CD4-positive, alpha-beta memory T cell (primary cell): ENCODE measurements at regions of chr19 and their contacts with region 1.

Region 1: DNA sequence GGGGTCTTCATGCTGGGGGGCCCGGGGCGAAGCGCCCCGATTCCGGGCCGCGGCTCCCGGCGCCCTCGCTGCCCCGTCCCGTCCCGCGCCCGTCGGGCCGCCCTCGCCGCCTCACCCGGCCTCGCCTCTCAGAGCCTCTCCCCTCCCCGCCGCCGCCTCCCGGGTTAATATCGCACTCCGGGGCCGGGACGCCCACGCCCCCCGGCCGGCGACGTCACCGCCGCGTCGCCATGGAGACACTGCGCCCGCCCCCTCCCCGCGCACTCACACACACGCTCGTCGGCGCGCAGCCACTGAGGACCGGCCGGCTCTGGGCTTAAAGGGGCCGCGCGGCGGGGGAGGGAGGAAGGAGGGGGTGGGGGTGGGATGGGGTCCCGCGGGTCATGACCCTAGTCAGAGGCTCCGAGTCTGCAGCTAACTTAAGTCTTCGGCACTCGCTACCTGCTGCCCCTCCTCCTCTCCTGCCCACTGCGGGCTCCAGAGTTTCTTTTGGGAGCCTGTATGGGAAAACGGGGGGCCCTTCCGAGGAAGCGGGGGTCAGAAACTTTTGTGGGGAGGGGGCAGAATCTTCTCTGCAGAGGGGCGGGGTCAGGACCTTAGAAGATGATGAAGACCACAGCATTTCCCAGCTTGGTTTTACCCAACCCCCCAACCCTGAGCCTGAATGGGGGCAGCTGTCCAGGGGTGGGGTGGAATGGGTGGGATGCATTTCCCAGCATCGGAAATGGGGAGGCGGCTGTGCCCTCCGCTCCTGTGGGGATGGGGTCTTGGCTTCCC is at the start of gene ERF:
- DNase-seq: peak; percentile 92 to 95 (median 94)
- H3K4me3 ChIP-seq: peak within 1 kb of the TSS; percentile 69 to 90
- H3K4me3 Mint-ChIP-seq: peak within 1 kb of the TSS; percentile 76 to 88 (median 82)
- H3K27ac ChIP-seq: peak within 1 kb of the TSS; percentile 93
- H3K27ac Mint-ChIP-seq: peak within 1 kb of the TSS; percentile 81 to 88 (median 86)
- H3K4me1 ChIP-seq: peaks cover 35% of the 10 kb centered on the region
- H3K4me1 Mint-ChIP-seq: peaks cover 12 to 40% (median 27%) of the 10 kb centered on the region in 4 donors
- H3K27me3 ChIP-seq: no peaks in the 10 kb centered on the region
- H3K27me3 Mint-ChIP-seq: peaks cover 3 to 4% of the 10 kb centered on the region in 2 donors
- total RNA-seq, gene ERF: 38.5 to 39.9 TPM

Region 2: DNA sequence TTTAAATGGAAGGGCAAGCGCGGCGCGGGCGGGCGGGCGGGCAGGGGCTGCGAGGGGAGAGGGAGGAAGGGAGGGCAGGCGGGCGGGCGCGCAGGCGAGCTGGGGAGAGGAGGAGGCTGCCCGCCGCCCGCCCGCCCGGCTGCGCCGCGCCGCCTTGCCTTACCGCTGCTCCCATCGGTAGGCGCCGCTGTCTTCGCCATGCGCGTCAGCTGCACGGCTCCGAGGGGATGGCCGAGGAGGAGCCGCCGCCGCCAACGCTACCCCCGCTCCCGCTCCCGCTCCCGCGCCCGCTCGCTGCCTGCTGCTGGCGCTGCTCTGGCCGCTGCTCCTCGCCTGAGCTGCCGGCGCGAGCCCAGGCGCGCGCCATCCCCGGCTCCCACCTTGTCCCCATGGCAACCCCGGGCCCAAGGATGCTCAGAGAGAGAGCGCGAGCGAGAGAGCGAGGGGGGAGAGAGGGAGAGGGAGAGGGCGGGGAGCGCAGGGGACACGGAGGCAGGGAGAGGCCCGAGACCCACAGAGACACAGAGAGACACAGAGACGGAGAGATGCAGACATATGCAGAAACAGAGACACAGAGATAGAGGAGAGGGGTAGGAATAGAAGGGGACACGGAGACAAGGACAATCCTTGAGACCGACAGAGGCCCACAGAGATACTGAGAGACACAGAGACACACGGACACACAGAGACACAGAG is 78.0 kb before region 1 on chr19:
- CTCF ChIA-PET with region 1: no interaction called
- POLR2A ChIA-PET with region 1: no interaction called
- intact Hi-C with region 1: no loop called
- DNase-seq: peak; percentile 75 to 79 (median 78)
- H3K4me3 ChIP-seq: peak overlapping the region in 1 of 2 donors; percentile 59
- H3K4me3 Mint-ChIP-seq: no peak overlapping the region
- H3K27ac ChIP-seq: no peak overlapping the region
- H3K27ac Mint-ChIP-seq: no peak overlapping the region
- H3K4me1 ChIP-seq: peaks cover 29% of the 10 kb centered on the region
- H3K4me1 Mint-ChIP-seq: peaks cover 10 to 29% (median 18%) of the 10 kb centered on the region in 4 donors
- H3K27me3 ChIP-seq: peaks cover 17% of the 10 kb centered on the region
- H3K27me3 Mint-ChIP-seq: peaks cover 4 to 11% of the 10 kb centered on the region in 2 donors

Region 3: DNA sequence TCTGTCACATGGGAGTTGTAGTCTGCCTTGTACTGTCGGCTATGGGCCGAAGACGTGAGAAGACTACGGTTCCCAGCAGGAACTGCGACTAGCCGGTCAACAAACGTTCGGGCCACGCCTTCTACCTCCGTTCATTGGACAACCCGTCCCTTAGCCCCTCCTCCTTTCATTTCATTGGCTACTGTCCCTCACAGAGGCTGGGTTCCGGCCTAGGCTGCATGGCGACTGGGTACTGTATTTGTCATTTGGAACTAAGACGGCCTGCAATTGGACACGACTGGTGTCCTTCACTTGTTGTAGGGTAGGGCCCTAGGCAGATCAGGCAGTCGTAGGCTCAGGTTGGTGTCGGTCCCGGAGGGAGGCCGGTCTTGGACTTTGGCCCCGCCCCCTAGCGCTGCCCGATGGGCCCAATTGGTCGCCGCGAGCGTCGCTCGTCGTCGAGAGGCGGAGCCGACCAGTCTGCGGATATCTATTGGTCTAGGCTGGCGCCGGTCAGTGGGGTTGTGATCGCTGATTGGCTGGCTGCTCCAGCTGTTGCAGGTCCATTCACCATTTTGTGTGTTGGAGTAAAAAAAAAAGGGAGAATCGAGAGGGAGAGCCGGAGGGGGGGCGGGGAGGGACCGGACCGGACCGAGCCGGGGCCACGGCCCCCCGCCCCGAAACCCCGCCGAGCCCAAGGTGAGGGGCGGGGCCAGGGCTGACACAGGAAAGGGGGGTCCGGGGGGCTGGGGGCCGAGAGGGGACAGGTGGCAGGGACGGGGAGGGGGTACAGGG is 13.7 kb after region 1 on chr19 and contains the start of gene CIC:
- CTCF ChIA-PET with region 1: no interaction called
- POLR2A ChIA-PET with region 1: interaction called, 8 read pairs
- intact Hi-C with region 1: loop called (anchors 1 kb)
- DNase-seq: peak; percentile 100
- H3K4me3 ChIP-seq: peak within 1 kb of the TSS; percentile 83 to 96
- H3K4me3 Mint-ChIP-seq: peak within 1 kb of the TSS in 4 of 8 donors; percentile 89 to 94 (median 92)
- H3K27ac ChIP-seq: peak within 1 kb of the TSS; percentile 99
- H3K27ac Mint-ChIP-seq: peak within 1 kb of the TSS in 4 of 7 donors; percentile 96 to 99 (median 98)
- H3K4me1 ChIP-seq: peaks cover 33% of the 10 kb centered on the region
- H3K4me1 Mint-ChIP-seq: peaks cover 0 to 29% (median 26%) of the 10 kb centered on the region in 4 donors
- H3K27me3 ChIP-seq: no peaks in the 10 kb centered on the region
- H3K27me3 Mint-ChIP-seq: no peaks in the 10 kb centered on the region
- total RNA-seq, gene CIC: 81.6 to 82.6 TPM

Region 4: DNA sequence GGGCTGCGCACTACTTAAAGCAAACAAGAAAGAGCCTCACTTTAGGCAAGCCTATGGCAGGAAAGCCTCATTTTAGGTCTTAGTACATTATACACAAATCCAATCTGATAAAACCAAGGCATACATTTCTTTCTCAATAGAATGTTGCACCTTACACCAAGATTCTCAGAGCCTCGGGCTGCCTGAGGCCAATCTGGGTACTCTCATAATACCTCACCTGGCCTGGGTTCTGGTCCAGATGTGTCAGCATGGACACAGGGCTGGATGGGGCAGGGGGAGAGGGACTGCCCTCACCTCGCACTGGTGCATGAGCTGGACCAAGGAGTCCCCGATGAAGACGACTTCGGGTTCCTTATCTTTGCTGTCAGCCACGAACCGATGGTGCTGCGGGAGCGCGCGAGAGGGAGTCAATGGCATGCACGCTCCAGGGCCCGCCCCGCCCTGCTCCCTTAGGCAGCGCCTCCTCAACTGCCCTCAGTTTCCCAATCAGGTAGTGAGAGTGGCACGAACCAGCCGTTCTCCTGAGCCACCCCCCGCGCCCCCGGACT is 46.6 kb after region 1 on chr19 and contains the start of gene PRR19:
- CTCF ChIA-PET with region 1: interaction called, 6 read pairs
- POLR2A ChIA-PET with region 1: interaction called, 4 read pairs
- intact Hi-C with region 1: loop called (anchors 2 kb)
- DNase-seq: no peak
- H3K4me3 ChIP-seq: peak within 1 kb of the TSS; percentile 52 to 66
- H3K4me3 Mint-ChIP-seq: peak within 1 kb of the TSS; percentile 85 to 93 (median 90)
- H3K27ac ChIP-seq: peak within 1 kb of the TSS; percentile 63
- H3K27ac Mint-ChIP-seq: peak within 1 kb of the TSS; percentile 81 to 94 (median 89)
- H3K4me1 ChIP-seq: peaks cover 20% of the 10 kb centered on the region
- H3K4me1 Mint-ChIP-seq: peaks cover 16 to 33% (median 22%) of the 10 kb centered on the region in 4 donors
- H3K27me3 ChIP-seq: no peaks in the 10 kb centered on the region
- H3K27me3 Mint-ChIP-seq: no peaks in the 10 kb centered on the region
- total RNA-seq, gene PRR19: 0.28 to 0.64 TPM